Heart right ventricle (tissue), 16 donors: ENCODE measurements at regions of chr16 and their contacts with region 1.

Region 1: DNA sequence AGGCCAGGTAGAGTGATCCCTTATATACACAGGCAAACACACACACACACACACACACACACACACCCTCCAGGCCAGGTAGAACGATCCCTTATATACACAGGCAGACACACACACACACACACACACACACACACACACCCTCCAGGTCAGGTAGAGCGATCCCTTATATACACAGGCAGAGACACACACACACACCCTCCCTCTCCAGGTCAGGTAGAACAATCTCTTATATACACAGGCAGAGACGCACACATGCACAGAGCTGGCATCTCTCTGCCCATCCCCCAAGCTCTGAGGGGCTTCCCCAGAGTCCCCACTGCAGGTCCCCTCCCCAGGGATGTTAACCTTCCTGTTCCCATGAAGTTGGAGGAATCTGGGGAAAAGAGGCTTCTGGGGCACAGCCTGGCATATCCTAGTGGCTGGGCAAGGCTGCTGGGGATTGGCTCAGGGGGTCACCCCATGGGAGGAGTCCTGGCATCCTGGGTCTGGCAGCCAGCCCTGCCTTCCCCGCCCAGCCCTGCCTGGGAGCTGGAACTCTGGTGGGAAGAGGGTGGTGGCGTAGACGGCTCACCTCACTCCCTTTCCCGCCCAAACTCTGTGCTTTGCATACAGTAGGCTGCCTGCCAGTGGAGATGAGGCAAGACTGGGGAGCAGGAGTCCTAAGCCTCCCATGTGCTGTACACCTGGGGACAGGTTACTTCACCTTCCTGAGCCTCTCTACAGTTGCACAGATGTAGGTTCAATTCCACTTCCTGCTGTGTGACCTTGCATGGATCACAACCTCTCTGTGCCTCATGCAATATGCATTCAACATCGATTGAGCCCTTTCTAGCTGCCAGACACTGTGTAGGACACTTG is 41.8 kb downstream of the TEKT5 start:
- DNase-seq: no peak
- ATAC-seq: peak in 2 of 8 donors; percentile 34 to 44
- H3K4me3 ChIP-seq: no peak overlapping the region
- H3K27ac ChIP-seq: no peak overlapping the region
- H3K4me1 ChIP-seq: no peaks in the 10 kb centered on the region
- H3K27me3 ChIP-seq: no peaks in the 10 kb centered on the region
- CTCF ChIP-seq: no peak

Region 2: GRCh38 chr16:10594367-10594944 is 58.5 kb before region 1 on chr16:
- intact Hi-C with region 1: loop called in 1 of 10 experiments (anchors 10 kb)
- DNase-seq: no peak
- ATAC-seq: no peak
- H3K4me3 ChIP-seq: no peak overlapping the region
- H3K27ac ChIP-seq: no peak overlapping the region
- H3K4me1 ChIP-seq: peaks cover 0 to 21% (median 16%) of the 10 kb centered on the region in 9 donors
- H3K27me3 ChIP-seq: peaks cover 0 to 4% (median 0%) of the 10 kb centered on the region in 7 donors
- CTCF ChIP-seq: no peak